Activated CD4-positive, alpha-beta memory T cell treated with anti-CD3 and anti-CD28 coated beads, Interleukin-2, amount 10 ng/mL, durations not matched to agents 7 days and 5 days (primary cell): ENCODE measurements at regions of chr14 and their contacts with region 1.

Region 1: DNA sequence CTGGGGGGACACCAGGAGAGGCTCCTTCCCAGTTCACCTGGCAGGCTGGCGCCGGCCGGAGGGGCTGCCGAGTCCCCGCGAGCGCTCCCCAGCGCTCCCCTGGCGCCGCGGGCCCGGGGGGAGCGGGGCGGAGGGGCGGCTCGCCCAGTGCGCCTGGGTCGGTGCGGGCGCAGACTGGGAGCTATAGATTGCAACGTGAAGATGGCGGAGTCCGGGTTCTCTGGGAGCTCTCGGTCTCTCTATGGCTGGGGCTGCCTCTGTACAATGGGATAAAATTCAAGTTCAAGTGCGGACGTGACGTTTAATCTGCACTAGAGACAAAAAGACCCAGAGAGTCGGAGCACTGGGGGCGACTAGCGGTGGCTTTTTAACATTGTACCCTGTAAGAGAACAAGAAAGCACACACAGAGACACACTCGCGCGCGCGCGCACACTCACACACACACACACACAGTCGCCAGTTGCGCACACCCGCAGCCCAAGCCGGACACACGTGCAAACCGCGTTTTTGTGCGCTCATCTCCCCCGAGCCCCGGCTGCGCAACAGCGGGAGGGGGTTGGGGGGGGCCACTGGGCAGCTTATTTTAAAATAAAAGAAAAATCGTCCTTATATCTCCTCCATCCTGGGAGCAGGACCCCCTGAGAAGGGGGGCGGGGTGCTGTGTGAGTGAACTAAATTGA is at the start of gene BCL11B:
- DNase-seq: peak; percentile 93
- H3K4me3 Mint-ChIP-seq: peak within 1 kb of the TSS; percentile 89
- H3K27ac Mint-ChIP-seq: peak within 1 kb of the TSS; percentile 95
- H3K4me1 Mint-ChIP-seq: peaks cover 30% of the 10 kb centered on the region
- H3K27me3 Mint-ChIP-seq: peaks cover 20% of the 10 kb centered on the region
- total RNA-seq, gene BCL11B: 81.7 to 82.0 TPM

Region 2: DNA sequence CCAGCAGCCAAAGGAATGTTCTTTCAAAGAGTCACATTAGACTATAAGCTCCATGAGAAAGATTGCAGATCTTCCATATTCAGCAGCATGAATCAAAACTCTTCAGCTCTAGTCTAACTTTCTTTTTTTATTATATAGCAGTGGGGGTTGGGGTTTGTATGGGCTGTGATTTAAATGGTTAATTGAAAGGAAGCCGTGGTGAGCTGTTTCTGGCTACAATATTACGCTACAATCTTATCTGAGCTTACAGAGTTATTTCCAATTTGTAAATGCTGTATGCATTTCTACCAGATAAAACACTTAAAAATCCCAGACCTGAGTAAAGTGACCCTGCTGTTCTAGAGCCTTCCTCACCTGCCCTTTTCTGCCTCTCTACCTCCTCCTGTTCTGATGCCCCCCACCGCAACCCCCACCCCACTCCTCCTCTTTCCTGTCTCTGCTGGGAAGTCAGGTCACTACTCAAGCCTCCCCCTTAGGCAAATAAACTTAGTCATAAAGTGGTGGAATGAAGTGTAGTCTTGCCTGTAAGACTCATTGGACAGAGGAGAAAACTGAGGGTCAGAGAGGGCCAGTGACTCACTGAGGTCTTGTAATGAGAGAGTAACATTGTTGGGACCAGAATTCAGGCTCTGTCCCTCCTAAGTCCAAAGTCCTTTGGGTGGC is 1089.6 kb before region 1 on chr14:
- CTCF ChIA-PET with region 1: interaction called, 3 read pairs
- POLR2A ChIA-PET with region 1: interaction called, 93 read pairs
- DNase-seq: no peak
- H3K4me3 Mint-ChIP-seq: peak overlapping the region; percentile 12
- H3K27ac Mint-ChIP-seq: peak overlapping the region; percentile 83
- H3K4me1 Mint-ChIP-seq: peaks cover 85% of the 10 kb centered on the region
- H3K27me3 Mint-ChIP-seq: no peaks in the 10 kb centered on the region

Region 3: DNA sequence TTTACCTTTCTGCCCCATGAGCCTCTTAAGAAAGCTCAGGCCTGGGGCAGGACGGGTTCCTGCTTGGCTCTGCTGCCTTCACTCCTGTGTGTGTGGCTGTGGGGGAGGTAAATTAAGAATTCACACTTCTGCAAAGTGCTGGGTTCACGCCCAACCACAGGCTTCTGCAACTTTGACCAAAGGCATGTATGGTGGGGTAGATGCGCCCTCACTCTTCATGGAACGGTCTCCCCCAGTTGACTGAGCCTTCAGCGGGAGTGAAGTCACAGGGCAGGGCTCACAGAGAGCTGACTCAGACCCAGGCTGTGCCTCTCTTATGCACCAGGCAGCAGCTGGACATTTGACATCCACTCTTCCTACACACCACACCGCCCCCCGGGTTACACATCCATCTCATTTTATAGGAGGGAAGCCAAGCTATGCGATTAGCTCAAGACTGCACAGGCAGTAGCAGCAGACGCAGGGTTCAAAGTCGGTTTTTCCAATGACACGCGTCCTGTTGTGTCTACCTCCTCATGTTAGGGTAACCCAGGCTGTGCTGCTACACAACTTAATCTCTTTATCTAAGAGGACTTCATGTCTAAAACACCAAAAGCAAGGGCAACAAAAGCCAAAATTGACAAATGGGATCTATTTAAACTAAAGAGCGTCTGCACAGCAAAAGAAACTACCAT is 15.3 kb after region 1 on chr14:
- CTCF ChIA-PET with region 1: interaction called, 8 read pairs
- POLR2A ChIA-PET with region 1: interaction called, 15 read pairs
- DNase-seq: peak; percentile 39
- H3K4me3 Mint-ChIP-seq: peak overlapping the region; percentile 69
- H3K27ac Mint-ChIP-seq: peak overlapping the region; percentile 71
- H3K4me1 Mint-ChIP-seq: peaks cover 24% of the 10 kb centered on the region
- H3K27me3 Mint-ChIP-seq: no peaks in the 10 kb centered on the region

Region 4: DNA sequence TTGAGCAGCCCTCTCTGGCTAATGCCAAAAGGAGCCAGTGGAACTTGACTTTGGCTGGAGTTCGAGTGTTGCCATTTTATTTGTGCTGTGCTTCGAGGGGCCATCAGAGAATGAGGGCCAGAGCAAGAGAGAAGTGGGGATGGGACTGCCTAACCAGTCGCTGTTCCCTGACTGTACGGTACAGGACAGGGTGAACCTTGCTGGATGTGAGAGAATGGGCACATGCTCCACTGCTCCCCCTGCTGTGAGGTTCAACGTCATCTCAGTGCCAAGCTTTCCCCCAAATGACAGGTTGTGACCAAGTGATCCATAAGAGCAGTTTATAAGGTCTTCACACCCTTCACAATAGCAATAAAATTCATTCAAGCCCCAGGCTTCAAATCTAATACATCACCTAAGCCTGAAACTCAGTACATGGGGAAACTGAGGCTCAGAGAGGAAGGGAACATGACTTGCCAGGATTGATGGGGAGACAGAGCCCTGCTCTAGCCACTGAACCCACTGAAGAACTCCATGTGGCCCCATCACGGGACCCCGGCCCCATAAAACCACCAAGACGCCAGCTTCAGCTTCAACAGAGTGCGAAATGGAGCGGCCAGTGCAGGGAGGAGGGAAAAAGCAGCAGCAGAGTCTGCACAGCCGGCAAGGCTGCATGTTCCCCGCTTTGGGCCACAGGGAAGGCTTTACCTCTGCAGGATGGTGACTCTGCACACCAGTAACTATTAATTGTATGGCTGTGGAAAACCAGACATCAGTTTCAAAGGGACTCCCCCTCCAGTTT is 55.2 kb after region 1 on chr14:
- CTCF ChIA-PET with region 1: no interaction called
- POLR2A ChIA-PET with region 1: no interaction called
- DNase-seq: no peak
- H3K4me3 Mint-ChIP-seq: no peak overlapping the region
- H3K27ac Mint-ChIP-seq: no peak overlapping the region
- H3K4me1 Mint-ChIP-seq: no peaks in the 10 kb centered on the region
- H3K27me3 Mint-ChIP-seq: peaks cover 2% of the 10 kb centered on the region

Region 5: GRCh38 chr14:99363616-99364265 is 91.7 kb after region 1 on chr14:
- CTCF ChIA-PET with region 1: no interaction called
- POLR2A ChIA-PET with region 1: no interaction called
- DNase-seq: no peak
- H3K4me3 Mint-ChIP-seq: no peak overlapping the region
- H3K27ac Mint-ChIP-seq: no peak overlapping the region
- H3K4me1 Mint-ChIP-seq: no peaks in the 10 kb centered on the region
- H3K27me3 Mint-ChIP-seq: peaks cover 8% of the 10 kb centered on the region